ENCODE measurements at regions of chr10 and their contacts with region 1.

Region 1: DNA sequence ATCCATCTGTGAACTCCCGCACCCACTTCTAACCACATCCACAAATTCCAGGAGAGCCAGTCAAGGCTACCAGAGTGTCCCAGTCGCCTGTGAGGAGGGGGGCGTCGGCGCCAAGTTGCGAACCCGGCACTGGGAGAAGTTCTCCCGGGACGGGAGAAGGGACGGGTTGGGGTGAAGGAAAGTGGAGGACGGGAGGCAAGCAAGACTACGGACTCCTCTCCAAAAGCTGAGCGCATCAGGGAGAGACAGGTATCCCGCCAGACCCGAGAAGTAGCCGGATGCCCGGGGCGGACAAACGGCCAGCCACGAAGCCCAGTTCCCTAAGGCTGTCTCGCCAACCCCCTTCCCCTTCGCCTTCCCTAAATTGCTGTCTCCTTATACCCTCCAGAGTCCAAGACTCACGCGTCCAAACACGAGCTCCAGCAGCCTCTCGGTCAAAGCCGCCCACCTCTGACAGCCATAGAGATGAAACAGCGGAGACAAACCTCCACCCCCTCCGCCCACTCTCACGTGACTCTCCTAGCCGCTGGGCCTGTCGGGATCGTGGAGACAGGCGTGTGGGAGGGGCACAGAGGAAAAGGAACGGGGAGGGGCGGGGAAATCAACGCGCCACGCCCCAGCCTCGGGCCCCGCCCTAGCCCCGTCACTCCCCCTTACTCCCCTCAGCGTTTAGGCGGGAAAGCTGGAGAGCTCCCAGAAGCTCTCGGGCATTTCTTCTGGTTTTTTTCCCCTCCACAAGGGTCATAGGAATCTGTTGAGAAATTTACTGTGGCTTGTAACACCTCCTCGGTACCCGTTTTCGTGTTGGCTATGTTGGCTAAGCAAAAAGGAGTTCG is at the start of gene MICU1:
- DNase-seq: peak; percentile 91 to 98
- H3K4me3 ChIP-seq: peak within 1 kb of the TSS; percentile 79 to 95
- H3K27ac ChIP-seq: peak within 1 kb of the TSS; percentile 82 to 91
- H3K4me1 ChIP-seq: peaks cover 3 to 8% of the 10 kb centered on the region in 2 donors
- H3K27me3 ChIP-seq: no peaks in the 10 kb centered on the region
- CTCF ChIP-seq: no peak
- total RNA-seq, gene MICU1: 18.9 TPM

Region 2: DNA sequence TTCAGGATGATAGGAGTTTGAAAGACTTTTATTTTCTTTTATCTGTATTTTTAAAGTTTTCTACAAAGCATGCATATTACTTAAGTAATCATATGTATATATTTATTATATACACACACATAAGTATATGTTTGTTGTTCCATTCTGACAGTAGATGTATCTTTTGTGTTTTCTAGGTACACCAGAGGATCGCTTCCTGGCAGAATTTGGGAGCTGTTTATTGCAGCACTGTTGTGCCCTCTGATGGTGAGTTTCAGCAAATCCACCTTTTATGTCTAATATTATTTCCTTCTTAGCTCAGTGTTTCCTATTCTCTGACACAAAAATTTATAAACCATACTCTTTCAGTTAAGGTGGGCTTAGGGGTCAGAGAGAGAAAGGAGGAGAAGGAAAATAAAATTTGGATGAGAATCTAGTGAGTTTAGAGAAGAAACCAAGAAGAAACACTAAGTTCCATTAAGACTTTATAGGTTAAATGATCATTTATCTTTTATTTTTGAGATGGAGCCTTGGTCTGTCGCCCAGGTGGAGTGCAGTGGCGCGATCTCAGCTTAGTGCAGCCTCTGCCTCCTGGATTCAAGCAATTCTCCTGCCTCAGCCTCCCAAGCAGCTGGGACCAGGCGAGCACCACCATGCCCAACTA is 208.5 kb after region 1 on chr10:
- intact Hi-C with region 1: loop called (anchors 5 kb)
- DNase-seq: peak in 1 of 2 donors; percentile 66
- H3K4me3 ChIP-seq: no peak overlapping the region
- H3K27ac ChIP-seq: no peak overlapping the region
- H3K4me1 ChIP-seq: peaks cover 0 to 3% of the 10 kb centered on the region in 2 donors
- H3K27me3 ChIP-seq: no peaks in the 10 kb centered on the region
- CTCF ChIP-seq: peak; percentile 53 to 70 (median 63)